Lower lobe of right lung (tissue), 2 donors: ENCODE measurements at regions of chr1 and their contacts with region 1.

Region 1: DNA sequence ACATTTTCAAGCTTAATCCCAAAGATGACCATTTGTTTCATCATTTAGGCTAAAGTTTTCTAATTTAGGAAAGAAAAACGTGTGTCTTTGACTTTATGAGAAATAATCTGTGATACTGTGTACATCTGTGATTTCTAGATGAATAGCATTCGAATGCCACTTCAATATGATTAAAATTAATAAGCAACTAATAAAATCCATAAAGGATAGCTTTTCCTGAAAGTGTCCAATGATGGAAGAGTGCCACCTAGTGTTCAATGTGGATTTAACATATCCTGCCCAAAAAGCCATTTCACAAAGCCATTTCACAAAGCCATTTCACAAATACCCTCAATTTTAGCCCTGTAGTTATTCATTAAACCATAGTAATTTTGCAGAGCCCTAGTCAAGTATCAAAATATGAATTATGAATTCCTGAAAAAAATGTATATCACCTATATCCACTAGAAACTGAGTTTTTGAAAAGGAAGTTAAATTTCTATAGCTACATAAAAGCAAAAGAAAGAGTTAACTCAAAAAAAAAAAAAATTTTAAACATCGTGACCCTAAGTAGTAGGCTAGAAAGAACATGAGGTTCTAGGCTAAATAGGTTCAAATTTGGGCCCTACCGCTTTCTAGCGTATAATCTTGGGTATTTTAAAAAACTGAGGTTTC is 19.1 kb downstream of the NME7 start:
- DNase-seq: no peak
- ATAC-seq: no peak
- H3K4me3 ChIP-seq: no peak overlapping the region
- H3K27ac ChIP-seq: no peak overlapping the region
- H3K4me1 ChIP-seq: no peaks in the 10 kb centered on the region
- H3K27me3 ChIP-seq: no peaks in the 10 kb centered on the region
- CTCF ChIP-seq: peak; percentile 79

Region 2: DNA sequence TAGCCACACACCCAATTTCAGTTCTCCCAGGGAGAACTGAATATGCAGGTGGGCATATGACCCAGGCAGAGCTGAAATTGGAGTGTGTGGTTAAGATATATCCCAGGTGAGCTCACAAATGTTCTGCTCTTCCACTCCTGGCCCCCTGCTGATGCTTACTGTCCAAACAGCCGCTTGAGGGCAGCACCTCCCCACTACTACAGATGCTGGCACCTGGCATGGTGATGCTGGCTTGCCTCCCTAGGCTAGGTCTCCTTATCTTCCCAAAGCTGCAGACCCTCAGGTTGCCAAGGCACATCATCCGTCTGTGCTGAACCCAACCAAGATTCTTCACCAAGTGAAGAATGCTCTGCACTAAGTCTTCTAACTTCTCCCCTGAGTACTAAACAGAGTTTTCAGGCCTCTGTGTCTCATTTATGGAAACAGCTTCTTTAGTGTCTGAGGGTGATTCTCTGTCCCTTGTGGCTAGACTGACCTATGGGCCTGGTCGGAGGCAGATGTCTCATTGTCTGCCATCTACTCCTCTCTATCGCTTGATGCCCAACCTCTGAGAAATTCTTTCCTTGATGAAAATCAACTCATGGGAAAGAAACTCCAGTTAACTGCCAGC is 744.9 kb before region 1 on chr1:
- intact Hi-C with region 1: loop called (anchors 5 kb)
- DNase-seq: peak; percentile 75
- ATAC-seq: peak; percentile 91 to 95
- H3K4me3 ChIP-seq: no peak overlapping the region
- H3K27ac ChIP-seq: no peak overlapping the region
- H3K4me1 ChIP-seq: peaks cover 4% of the 10 kb centered on the region
- H3K27me3 ChIP-seq: no peaks in the 10 kb centered on the region
- CTCF ChIP-seq: peak; percentile 78

Region 3: DNA sequence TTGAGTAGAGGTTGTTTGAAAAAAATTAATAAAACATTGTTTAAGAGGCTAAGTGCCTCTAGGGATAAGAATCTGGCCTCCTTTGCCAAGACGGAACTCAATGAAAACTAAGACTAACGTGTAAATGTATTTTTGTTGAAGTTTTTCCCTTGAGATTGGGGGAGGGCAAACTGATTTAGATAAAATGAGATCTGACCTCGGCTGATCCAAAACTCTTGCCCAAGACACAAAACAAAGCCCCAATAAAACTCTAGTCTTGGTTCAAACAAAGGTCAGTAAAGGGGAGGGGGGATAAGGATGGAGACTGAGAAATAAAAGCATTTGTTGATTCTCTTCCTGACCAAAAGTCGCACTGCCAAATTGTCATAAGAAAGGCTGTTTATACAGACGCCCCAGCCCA is 484.7 kb before region 1 on chr1:
- intact Hi-C with region 1: no loop called
- DNase-seq: no peak
- ATAC-seq: peak in 1 of 2 donors; percentile 9
- H3K4me3 ChIP-seq: no peak overlapping the region
- H3K27ac ChIP-seq: no peak overlapping the region
- H3K4me1 ChIP-seq: peaks cover 18% of the 10 kb centered on the region
- H3K27me3 ChIP-seq: no peaks in the 10 kb centered on the region
- CTCF ChIP-seq: no peak

Region 4: DNA sequence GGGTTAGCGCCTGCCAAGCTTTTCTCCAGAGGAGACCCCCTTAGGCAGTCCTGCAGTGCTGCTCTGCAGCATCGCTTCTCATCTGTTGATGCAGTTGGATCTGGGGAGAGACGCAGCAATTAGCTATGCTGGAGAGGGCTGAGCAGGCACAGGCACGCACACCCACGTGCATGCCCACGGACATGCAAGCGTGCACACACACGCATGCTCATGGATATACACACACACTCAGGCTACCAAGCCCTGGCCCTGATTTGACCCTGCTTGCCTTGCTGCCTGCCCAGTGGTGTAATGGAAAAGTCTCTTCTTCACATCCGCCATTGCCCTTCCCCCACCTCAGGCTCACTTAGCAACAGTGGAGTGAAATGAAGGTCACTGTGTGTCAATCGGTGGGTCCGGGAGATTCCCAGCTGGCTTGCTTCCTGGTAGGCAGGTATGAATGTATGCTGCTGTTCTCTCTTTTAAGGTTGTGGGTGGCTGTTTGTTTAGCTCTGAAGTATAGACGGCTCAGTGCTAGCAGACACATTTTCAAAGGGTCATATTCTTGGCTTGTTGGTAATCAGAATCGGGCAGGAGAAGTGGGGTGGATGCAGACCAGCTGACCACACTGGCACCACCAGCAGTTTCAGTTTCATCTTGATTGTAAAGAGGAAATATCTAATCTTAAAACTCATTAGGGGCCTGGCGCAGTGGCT is 232.5 kb before region 1 on chr1:
- intact Hi-C with region 1: no loop called
- DNase-seq: peak; percentile 76
- ATAC-seq: peak; percentile 86 to 87
- H3K4me3 ChIP-seq: peak overlapping the region; percentile 24
- H3K27ac ChIP-seq: peak overlapping the region; percentile 57
- H3K4me1 ChIP-seq: peaks cover 42% of the 10 kb centered on the region
- H3K27me3 ChIP-seq: no peaks in the 10 kb centered on the region
- CTCF ChIP-seq: no peak

Region 5: GRCh38 chr1:169491845-169492281 is 143.4 kb after region 1 on chr1:
- intact Hi-C with region 1: no loop called
- DNase-seq: no peak
- ATAC-seq: peak in 1 of 2 donors; percentile 51
- H3K4me3 ChIP-seq: no peak overlapping the region
- H3K27ac ChIP-seq: no peak overlapping the region
- H3K4me1 ChIP-seq: peaks cover 3% of the 10 kb centered on the region
- H3K27me3 ChIP-seq: no peaks in the 10 kb centered on the region
- CTCF ChIP-seq: no peak